Activated CD4-positive, alpha-beta T cell treated with anti-CD3 and anti-CD28 coated beads for 36 hours (primary cell): ENCODE measurements at regions of chr11 and their contacts with region 1.

Region 1: GRCh38 chr11:94623120-94623735 is 56.1 kb downstream of the PIWIL4 start:
- DNase-seq: peak; percentile 70
- ATAC-seq: peak; percentile 93
- H3K4me3 Mint-ChIP-seq: no peak overlapping the region
- H3K27ac Mint-ChIP-seq: no peak overlapping the region
- H3K4me1 Mint-ChIP-seq: peaks cover 2% of the 10 kb centered on the region
- H3K27me3 Mint-ChIP-seq: peaks cover 2% of the 10 kb centered on the region

Region 2: DNA sequence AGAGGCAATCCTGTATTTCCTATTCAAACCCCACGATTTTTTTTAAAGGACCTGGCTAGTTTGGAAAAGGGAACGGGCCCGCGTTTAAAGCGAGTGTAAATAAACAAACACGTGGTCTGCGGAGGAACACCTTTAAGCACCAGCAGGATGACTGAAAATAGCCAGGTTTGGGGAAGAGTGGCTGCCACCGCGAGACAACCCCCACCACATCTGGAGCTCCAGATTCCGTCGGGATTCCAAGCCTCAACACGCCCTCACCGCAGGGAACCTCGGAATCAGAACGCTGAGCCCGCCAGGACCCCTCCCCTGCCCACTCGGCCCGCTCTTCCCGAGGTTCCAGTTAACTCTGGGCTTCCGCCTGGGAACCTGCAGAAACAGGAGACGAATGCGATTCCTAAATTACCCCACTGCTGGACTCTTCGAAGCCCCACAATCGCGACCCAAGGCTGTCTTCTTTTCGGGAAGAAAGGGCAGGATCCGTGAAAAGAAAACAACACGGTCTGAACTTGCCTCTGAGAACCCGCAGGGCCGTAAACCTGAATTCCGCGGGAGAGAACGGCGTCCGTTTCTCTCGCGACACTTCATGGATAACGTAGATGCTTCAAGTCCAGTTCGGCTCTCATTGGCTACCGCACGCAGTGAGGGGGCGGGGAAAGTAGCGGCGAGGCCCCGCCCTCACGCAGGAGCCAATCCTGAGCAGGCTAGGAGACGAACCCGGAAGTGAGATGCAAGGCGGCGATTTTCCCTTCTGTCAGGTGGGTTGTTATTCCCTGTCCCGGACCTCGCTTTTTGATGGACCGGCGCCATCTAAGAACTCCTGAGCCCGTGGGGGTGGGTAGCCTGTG is 129.7 kb before region 1 on chr11 and contains the starts of genes ANKRD49 and MRE11:
- CTCF ChIA-PET with region 1: no interaction called
- POLR2A ChIA-PET with region 1: no interaction called
- intact Hi-C with region 1: no loop called
- DNase-seq: peak; percentile 97
- ATAC-seq: peak; percentile 100
- H3K4me3 Mint-ChIP-seq: peak within 1 kb of the TSS; percentile 94
- H3K27ac Mint-ChIP-seq: peak within 1 kb of the TSS; percentile 97
- H3K4me1 Mint-ChIP-seq: peaks cover 24% of the 10 kb centered on the region
- H3K27me3 Mint-ChIP-seq: no peaks in the 10 kb centered on the region
- total RNA-seq, gene ANKRD49: 20.8 to 22.4 TPM
- total RNA-seq, gene MRE11: 36.8 to 51.3 TPM

Region 3: DNA sequence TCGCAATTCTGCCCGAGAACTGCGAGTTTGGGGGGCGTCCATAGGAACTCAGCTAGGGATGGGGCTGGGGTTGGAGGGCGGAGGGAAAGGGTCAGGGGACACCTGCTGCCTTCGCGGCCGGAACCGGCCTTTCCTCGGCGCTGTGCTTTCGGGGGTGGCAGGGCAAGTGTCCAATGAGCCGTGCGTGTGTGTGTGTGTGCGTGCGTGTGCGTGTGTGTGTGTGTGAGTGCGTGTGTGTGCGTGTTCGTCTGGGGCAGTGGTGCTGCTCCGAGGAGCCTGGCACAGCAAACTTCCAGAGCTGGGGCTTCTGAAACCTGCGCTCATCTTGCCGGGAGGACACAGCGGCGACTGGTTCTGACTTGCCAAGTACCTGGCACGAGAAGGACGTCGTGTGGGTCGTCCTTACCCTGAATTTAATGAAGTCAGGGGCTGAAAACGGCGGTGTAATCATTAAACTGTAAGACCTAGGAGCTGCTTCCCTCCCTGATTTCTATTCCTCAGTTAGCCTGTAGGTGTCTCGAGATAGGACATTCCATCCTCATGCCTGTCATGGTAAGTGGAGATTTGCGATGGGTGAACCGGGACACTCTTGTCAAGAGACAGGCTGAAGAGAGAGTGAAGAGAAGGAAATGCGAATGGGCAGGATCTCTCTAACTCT is 117.9 kb after region 1 on chr11:
- CTCF ChIA-PET with region 1: interaction called, 4 read pairs
- POLR2A ChIA-PET with region 1: no interaction called
- intact Hi-C with region 1: loop called in 1 of 2 experiments (anchors 5 kb)
- DNase-seq: peak; percentile 18
- ATAC-seq: peak; percentile 58
- H3K4me3 Mint-ChIP-seq: peak overlapping the region; percentile 52
- H3K27ac Mint-ChIP-seq: no peak overlapping the region
- H3K4me1 Mint-ChIP-seq: peaks cover 13% of the 10 kb centered on the region
- H3K27me3 Mint-ChIP-seq: peaks cover 33% of the 10 kb centered on the region

Region 4: GRCh38 chr11:94897330-94897768 is 274.1 kb after region 1 on chr11:
- CTCF ChIA-PET with region 1: interaction called, 30 read pairs
- POLR2A ChIA-PET with region 1: no interaction called
- intact Hi-C with region 1: loop called (anchors 1 kb)
- DNase-seq: peak; percentile 62
- ATAC-seq: no peak
- H3K4me3 Mint-ChIP-seq: no peak overlapping the region
- H3K27ac Mint-ChIP-seq: no peak overlapping the region
- H3K4me1 Mint-ChIP-seq: no peaks in the 10 kb centered on the region
- H3K27me3 Mint-ChIP-seq: no peaks in the 10 kb centered on the region

Region 5: DNA sequence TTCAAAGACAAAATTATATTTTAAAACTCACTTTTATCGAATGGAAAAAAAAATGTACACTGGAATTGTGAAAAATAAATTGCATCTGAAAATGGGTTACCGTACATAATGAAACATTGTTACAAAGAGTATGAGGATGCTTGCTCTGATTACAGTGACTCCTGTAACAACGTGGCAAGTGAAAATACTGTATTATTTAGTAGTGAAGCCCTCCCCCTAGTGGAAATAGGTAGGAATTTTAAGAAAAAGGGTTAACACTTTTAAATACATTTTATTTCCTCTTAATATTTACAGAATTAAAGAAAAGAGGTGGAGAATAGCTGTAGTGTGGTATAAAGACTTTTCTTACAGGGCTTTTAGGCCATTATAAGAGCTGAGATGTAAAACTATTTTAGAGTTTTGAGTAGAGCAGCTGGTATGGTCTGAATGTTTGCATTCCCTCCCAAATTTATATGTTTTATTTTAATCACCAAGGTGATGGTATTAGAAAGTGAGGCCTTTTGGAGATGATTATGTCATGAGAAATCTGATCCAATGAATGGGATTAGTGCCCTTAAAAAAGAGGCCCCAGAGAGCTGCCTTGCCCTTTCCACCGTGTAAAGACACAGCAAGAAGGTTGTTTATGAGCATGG is 1141.2 kb after region 1 on chr11:
- CTCF ChIA-PET with region 1: no interaction called
- POLR2A ChIA-PET with region 1: no interaction called
- intact Hi-C with region 1: loop called (anchors 2 to 10 kb)
- DNase-seq: no peak
- ATAC-seq: peak; percentile 65
- H3K4me3 Mint-ChIP-seq: no peak overlapping the region
- H3K27ac Mint-ChIP-seq: no peak overlapping the region
- H3K4me1 Mint-ChIP-seq: no peaks in the 10 kb centered on the region
- H3K27me3 Mint-ChIP-seq: no peaks in the 10 kb centered on the region